Activated naive CD4-positive, alpha-beta T cell treated with anti-CD3 and anti-CD28 coated beads for 36 hours (primary cell): ENCODE measurements at regions of chr7 and their contacts with region 1.

Region 1: GRCh38 chr7:25951031-25951948 is 200.7 kb upstream of the NFE2L3 start:
- DNase-seq: peak; percentile 91
- H3K4me3 Mint-ChIP-seq: peak overlapping the region; percentile 88
- H3K27ac Mint-ChIP-seq: no peak overlapping the region
- H3K4me1 Mint-ChIP-seq: peaks cover 16% of the 10 kb centered on the region
- H3K27me3 Mint-ChIP-seq: peaks cover 7% of the 10 kb centered on the region

Region 2: DNA sequence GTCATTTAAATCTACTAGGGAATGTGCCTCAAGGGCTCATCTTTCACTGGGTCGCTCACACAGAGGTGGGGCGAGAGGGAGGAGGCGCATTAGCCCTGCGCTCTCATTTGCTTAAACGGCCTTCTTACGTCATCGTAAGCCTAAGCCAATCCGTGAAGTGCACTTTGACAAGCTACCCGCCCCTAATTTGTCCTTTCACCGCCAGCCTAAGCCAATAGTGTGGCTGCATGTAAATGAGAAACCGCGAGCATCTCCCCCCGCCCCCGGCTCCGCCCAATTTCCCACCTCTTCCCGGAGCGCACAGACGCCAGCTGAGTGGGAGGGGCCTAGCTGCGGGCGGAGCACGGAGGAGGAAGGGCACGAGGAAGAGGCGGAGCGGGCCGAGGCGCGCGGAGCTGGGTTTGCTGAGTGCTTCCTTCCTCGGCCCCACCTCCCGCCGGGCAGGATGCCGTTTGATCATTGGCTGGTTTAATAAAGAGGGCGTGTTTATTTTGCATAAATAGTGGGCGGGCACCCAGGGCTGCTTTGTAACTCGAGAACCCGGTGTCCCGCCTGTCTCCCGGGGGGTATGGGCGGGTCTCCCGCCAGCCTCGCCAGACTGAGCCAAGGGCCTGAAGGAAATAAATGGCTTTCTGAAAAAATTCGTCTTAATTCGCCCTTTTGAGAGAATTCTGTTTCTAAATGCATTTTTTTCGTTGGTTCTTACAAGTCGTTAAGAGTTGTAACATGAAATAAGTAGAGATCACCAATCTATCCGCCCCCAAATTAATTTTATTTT is 88.8 kb before region 1 on chr7:
- CTCF ChIA-PET with region 1: no interaction called
- intact Hi-C with region 1: loop called (anchors 2 kb)
- DNase-seq: peak; percentile 99
- H3K4me3 Mint-ChIP-seq: peak overlapping the region; percentile 58
- H3K27ac Mint-ChIP-seq: peak overlapping the region; percentile 38
- H3K4me1 Mint-ChIP-seq: peaks cover 22% of the 10 kb centered on the region
- H3K27me3 Mint-ChIP-seq: peaks cover 70% of the 10 kb centered on the region

Region 3: DNA sequence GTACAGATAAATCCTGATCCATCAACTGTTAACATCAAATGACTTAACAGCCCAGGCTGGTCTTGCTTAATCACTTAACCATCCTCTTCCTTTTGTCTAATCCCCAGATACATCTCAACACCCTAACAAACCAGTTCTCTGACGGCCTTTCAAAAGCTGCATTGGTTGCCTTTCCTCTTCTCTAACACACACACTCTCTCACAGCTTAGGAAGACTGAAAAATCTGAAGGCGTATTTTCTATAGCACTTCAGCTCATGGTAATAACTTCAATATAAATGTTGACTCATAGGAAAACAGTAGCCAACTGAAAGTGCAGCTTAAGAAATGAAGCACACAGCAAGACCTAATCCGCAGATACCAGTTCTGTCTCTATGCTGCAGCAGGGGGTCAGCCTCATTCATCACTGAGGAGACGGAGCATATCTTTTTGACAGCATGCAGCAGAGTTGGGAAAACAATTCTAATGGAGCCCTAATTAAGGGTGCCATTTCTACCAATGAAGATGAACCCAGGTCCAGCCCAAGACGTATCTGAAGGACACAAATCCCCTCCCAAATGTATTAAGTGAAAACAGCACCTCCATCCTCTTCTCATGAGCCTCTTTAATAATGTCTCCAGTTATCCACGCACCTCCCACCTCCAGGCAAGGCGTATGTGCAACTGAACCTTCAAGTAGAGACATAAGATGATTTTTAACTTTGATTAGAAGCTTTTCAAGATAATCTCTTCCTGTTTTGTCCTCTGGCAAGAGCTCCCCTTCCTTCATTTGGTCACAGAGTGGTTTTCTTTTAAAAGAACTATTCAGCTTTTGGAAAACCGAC is 11.0 kb before region 1 on chr7:
- CTCF ChIA-PET with region 1: no interaction called
- intact Hi-C with region 1: loop called (anchors 1 kb)
- DNase-seq: no peak
- H3K4me3 Mint-ChIP-seq: peak overlapping the region; percentile 12
- H3K27ac Mint-ChIP-seq: peak overlapping the region; percentile 26
- H3K4me1 Mint-ChIP-seq: peaks cover 12% of the 10 kb centered on the region
- H3K27me3 Mint-ChIP-seq: peaks cover 4% of the 10 kb centered on the region

Region 4: DNA sequence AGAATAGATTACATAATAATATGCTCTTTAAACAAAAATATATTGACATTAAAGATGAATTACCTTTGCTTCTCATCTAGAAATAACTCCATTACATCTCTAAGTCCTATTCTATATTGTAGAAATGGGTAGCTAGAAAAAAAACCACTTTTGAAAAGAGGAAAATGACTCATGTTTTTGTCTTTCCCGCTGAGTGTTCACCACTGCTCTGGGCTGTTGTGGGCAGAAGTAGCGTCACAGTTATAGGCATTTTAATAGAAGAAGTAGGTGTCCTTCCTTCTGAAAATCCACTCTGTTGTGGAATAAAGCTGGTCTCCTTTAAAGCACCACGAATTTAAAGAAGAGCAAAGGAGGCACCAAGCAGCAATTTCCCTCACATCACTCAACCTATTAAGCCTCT is 83.1 kb after region 1 on chr7:
- CTCF ChIA-PET with region 1: no interaction called
- intact Hi-C with region 1: no loop called
- DNase-seq: no peak
- H3K4me3 Mint-ChIP-seq: no peak overlapping the region
- H3K27ac Mint-ChIP-seq: no peak overlapping the region
- H3K4me1 Mint-ChIP-seq: peaks cover 9% of the 10 kb centered on the region
- H3K27me3 Mint-ChIP-seq: peaks cover 5% of the 10 kb centered on the region

Region 5: DNA sequence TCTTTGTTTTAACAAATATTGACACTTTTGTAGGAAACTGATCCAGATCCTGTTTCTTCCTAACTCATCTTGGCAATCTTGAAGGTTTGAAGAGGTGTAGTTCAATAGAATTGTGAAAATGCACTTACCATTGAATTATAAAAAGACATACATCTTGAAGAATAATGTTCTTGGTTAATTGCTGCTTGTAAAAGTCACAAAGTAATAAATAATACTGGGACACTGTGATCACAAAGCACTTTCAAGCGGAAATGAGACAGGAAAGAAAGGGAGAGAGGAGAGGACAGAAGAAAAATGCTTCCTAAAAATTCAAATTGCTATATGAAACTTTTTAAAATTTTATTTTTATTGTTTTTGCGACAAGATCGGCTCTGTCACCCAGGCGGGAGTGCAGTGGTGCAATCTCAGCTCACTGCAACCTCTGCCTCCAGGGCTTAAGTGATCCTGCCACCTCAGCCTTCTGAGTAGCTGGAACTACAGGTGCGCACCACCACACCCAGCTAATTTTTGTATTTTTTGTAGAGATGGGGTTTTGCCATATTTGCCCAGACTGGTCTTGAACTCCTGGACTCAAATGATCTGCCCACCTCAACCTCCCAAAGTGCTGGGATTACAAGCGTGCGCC is 185.7 kb after region 1 on chr7:
- CTCF ChIA-PET with region 1: no interaction called
- intact Hi-C with region 1: no loop called
- DNase-seq: no peak
- H3K4me3 Mint-ChIP-seq: no peak overlapping the region
- H3K27ac Mint-ChIP-seq: no peak overlapping the region
- H3K4me1 Mint-ChIP-seq: no peaks in the 10 kb centered on the region
- H3K27me3 Mint-ChIP-seq: no peaks in the 10 kb centered on the region

Region 6: GRCh38 chr7:26525398-26526264 is 574.3 kb after region 1 on chr7:
- CTCF ChIA-PET with region 1: no interaction called
- intact Hi-C with region 1: no loop called
- DNase-seq: no peak
- H3K4me3 Mint-ChIP-seq: no peak overlapping the region
- H3K27ac Mint-ChIP-seq: no peak overlapping the region
- H3K4me1 Mint-ChIP-seq: no peaks in the 10 kb centered on the region
- H3K27me3 Mint-ChIP-seq: peaks cover 7% of the 10 kb centered on the region